GM23248 (cell line): ENCODE measurements at regions of chr9 and their contacts with region 1.

Region 1: DNA sequence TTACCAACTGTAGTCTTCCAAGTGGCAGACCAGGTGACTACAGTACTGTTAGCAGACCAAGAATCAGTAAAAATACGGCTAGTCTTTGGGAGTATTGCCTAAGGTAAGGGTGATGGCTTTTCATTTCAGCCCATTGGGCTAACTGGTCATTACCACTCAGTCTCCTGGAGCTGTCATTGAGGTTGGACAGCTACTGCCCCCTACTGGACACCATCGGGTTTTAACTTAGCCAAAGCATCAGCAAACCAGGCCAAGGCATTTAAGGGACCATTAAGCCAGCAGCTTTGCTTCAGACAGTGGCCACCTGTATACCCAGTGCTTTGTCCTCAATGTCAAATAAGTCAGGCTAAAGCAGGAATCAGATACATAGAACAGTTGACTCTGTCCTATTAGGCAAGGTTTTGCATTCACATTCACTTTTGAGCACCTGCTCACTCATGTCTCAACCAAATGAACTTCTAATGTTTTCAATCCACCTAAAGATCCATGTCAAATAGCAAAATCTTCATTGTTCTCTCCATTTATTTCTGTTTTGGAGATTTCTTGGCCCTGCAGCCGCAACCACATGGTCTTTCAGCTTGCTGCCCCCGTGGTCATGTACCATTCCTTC is 117.2 kb downstream of the INVS start:
- DNase-seq: peak; percentile 62
- H3K4me3 ChIP-seq: no peak overlapping the region
- H3K27ac ChIP-seq: no peak overlapping the region
- H3K4me1 ChIP-seq: peaks cover 12% of the 10 kb centered on the region
- H3K27me3 ChIP-seq: no peaks in the 10 kb centered on the region

Region 2: DNA sequence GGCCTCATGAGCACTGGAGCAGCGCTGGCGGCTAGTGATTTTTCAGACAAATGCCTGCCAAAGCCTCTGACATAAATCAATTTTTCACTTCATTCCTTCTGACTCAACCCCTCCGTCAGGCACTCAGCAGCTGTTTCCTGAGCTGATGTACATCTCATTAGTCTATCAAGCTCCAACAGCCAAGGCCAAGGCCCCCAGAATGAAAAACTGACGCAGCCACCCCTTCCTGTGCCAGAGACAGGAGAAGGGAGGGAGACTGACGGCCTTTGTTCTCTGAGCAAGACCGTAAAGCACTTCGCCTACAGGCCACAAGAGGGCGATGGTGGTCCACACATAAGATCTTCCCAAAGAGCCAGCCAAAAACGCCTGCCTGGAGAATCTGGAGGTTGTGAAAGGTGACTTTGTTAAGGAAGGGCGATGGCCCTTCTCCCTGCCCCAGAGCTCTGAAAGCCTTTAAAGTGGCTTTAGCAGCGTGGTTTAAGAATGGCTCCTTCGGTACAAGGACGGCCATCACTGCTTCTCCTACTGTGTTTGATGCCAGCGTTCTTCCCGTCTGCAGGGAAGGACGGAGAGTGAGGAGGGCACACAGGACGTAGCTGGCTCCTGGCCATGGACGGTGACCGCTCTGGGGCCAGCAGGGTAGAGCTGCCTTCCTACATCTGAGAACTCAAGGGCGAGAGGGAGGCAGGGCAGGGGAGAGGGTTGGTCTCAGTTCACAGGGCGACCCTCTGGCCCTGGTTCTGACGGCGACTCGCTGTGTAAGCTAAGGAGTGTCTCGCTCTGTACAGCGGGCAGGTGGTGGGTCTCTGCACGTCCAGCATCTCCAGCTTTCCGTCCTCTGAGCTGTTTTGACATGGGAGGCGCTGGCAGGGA is 1031.6 kb before region 1 on chr9:
- in situ Hi-C with region 1: loop called (anchors 25 kb)
- DNase-seq: peak; percentile 90
- H3K4me3 ChIP-seq: peak overlapping the region; percentile 57
- H3K27ac ChIP-seq: no peak overlapping the region
- H3K4me1 ChIP-seq: no peaks in the 10 kb centered on the region; the same call in 1 of the 2 replicates
- H3K27me3 ChIP-seq: 0 out of 2 replicates have a peak, but pooled peaks cover 11% of the 10 kb centered on the region

Region 3: DNA sequence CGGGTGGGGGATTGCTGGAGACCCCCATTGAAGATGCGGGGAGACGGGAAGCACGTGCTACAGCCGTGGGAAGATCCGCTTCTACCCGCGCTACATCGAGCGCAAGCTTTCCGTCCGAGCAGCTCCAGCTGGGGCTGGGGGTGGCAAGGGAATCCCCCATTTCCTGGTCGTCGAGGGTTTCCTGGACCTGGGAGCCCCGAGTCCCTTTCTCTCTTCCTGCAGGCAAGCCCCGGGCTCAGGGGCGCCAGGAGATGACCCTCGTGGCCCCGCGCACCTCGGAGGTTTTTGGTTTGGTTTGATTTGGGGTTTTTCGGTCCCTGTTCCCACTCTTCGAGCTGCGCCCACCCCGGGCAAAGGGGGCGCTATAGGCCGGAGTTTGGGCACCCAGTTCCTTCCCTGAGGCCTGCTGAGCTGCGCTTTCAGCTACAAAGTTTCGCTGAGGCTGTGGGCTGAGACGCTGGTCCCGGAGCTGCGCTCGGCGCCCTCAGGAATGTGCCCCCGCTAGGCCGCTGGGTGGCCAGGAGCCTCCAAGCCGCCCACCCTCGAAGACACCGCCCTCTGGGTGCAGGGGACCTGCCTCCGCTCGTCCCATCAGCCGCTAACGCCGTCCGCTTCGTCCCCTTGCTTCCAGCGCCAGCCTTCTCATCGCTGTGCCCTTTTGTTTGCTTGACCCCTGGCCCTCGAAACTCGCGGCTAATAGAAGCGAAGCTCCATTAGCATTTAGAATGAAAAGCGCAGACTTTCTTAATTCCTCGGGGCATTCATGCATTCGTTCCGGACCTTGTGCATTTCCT is 391.7 kb before region 1 on chr9:
- in situ Hi-C with region 1: loop called (anchors 25 kb)
- DNase-seq: peak; percentile 62
- H3K4me3 ChIP-seq: peak overlapping the region; percentile 85
- H3K27ac ChIP-seq: no peak overlapping the region
- H3K4me1 ChIP-seq: no peaks in the 10 kb centered on the region
- H3K27me3 ChIP-seq: no peaks in the 10 kb centered on the region

Region 4: DNA sequence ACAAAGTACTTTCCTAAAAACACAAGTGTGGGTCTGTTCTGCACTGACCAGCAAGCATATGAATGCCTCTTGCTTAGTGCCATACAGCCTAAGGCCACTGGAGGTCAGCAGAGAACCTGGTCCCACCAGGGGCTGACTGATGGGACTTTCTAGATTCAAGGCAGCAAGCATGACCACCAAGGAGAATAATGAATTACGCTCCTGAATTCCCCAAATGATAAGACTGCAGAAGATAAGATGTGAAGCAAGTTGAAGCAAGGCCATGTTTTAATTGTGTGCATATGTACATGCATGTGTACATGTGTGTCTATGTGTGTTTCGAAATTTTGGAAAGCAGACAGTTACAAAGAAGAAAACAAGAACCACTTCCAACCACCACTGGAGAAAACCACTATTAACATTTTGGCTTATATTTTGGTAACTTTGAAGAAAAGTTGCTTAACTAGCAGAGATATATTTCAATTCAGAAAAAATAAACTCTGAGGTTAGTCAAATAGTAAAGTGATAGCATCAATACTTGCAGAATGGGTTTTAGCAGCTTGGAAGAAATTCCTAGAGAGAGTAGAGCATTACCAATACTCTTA is 188.0 kb before region 1 on chr9:
- in situ Hi-C with region 1: loop called (anchors 25 kb)
- DNase-seq: peak; percentile 78
- H3K4me3 ChIP-seq: no peak overlapping the region
- H3K27ac ChIP-seq: no peak overlapping the region
- H3K4me1 ChIP-seq: no peaks in the 10 kb centered on the region
- H3K27me3 ChIP-seq: no peaks in the 10 kb centered on the region

Region 5: DNA sequence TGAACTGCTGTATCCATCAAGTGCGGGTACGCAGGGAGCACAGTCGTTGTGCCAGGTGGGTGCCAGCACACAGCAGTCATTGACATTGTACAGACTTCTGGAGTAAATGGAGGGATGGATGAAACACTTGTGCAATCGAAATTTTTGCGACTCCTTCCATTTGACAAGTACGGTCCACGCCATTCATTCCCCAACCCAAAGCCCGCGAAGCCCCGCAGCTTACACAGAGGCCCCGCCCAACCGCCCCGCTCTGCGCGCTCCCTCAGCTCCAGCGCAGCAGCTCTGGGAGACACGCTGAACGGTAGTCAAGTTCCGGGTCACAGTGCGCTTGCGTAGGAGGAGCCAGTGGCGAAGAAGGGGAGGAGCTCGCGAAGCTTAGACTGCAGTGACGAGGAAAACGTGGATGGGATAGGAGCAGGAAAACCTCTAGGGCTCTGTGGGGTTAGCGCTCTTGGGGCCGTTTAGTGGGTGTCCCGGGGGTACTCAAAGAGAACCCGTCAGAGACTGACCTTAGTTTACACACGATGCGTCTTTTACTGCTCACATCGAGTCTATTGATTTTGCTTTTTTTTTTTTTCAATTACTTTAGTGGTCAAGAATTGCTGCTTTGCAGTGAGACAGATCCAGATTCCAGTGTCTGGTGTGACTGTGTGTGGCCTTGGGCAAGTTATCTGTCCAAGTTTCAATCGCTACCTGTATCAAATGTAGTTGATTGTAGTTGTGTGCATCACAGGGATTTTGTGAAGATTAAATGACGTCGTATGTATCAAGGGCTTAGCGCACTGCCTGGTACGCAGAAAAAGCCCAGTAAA is 195.4 kb after region 1 on chr9:
- in situ Hi-C with region 1: no loop called
- DNase-seq: peak; percentile 97
- H3K4me3 ChIP-seq: peak overlapping the region; percentile 75
- H3K27ac ChIP-seq: peak overlapping the region; percentile 14; the same call in 1 of the 2 replicates
- H3K4me1 ChIP-seq: no peaks in the 10 kb centered on the region
- H3K27me3 ChIP-seq: no peaks in the 10 kb centered on the region

Region 6: DNA sequence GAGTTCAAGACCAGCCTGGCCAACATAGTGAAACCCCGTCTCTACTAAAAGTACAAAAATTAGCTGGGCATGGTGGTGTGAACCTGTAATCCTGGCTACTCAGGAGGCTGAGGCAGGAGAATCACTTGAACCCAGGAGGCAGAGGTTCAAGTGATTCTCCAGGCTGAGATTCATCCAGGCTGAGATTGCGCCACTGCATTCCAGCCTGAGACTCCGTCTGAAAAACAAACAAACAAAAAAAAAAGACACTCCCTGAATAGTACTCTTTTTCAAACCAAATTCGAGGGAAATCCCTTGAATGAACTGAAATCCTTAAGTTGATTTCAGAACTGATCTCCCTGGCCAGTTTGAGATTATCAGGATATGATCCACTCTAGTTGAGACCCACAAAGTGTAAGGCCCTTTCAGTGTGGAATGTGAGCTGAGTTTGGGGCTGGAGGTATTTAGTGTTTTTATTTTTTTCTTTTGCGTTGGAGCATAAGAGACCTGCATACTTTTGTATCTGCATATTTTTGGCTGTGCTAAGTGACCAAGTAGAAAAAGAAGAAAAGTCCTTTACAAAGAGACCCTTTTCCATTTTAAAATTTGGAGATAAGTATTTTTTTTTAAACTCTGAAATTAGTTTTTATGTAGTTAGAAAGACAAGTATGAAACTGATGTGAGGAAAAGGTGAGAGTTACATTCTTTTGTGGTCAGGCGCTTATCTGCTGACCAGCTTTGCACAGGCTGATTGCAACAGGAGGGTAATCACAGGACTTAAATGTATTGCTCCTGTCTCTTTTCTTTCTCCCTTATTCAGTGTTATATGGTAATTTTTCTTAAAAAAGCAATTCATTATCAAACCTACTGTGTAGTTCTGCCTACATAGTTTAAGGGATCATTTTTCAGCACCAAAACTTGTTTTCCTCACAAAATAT is 299.6 kb after region 1 on chr9:
- in situ Hi-C with region 1: no loop called
- DNase-seq: no peak
- H3K4me3 ChIP-seq: no peak overlapping the region
- H3K27ac ChIP-seq: no peak overlapping the region
- H3K4me1 ChIP-seq: no peaks in the 10 kb centered on the region
- H3K27me3 ChIP-seq: no peaks in the 10 kb centered on the region